ENCODE measurements at regions of chr3 and their contacts with region 1.

Region 1: GRCh38 chr3:112647122-112647521 is 6.2 kb upstream of the CCDC80 start:
- DNase-seq: no peak
- H3K4me3 ChIP-seq: no peak overlapping the region
- H3K27ac ChIP-seq: no peak overlapping the region
- H3K4me1 ChIP-seq: peaks cover 0 to 21% (median 10%) of the 10 kb centered on the region in 4 donors
- H3K27me3 ChIP-seq: peaks cover 0 to 11% (median 0%) of the 10 kb centered on the region in 3 donors
- CTCF ChIP-seq: no peak
- EP300 ChIP-seq: no peak
- POLR2A ChIP-seq: no peak

Region 2: DNA sequence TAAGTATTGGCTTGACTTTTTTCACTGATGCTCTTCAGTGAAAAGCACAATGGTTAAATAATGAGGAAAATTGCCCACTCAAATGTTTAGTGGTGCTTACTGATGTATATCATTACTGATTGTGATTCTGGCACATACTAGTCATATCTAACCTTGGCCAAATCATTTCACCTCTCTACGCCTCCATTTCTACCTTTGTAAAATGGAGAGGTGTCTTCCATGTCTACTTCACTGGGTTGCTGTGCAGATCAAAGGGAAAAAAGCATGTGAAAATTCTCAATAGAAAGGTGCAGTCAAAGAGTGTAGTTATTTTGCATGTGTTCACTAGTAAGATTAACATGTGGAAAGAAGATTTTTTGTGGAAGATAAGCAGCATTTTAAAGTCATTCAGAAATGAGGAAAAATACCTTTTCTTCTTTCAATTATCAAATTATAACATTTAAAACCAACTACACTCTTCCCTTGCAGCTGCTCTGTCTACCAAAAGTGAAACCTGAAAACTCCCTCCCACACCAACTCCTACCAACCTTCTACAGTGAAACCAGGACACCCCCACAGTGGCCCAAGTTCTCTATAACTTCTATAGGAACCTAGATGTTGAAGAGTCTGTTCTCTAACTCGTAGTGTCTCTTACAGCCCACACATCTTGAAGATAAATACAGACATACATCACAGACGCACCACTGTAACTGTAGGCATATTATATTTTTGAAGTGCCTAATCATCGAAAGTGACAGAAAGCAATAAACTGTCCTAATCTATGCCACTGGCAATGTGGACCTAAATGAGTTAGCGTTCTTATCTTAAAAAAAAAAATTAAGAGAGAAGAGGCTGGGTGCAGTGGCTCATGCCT is 326.4 kb after region 1 on chr3:
- intact Hi-C with region 1: loop called (anchors 5 kb)
- DNase-seq: peak in 1 of 2 donors; percentile 29
- H3K4me3 ChIP-seq: peak overlapping the region in 3 of 4 donors; percentile 11 to 19 (median 12)
- H3K27ac ChIP-seq: peak overlapping the region in 1 of 5 donors; percentile 60
- H3K4me1 ChIP-seq: no peaks in the 10 kb centered on the region
- H3K27me3 ChIP-seq: no peaks in the 10 kb centered on the region
- CTCF ChIP-seq: no peak
- EP300 ChIP-seq: no peak
- POLR2A ChIP-seq: no peak

Measured in stomach (tissue), 19 donors.